Transverse colon (tissue), 4 donors: ENCODE measurements at regions of chr3 and their contacts with region 1.

Region 1: DNA sequence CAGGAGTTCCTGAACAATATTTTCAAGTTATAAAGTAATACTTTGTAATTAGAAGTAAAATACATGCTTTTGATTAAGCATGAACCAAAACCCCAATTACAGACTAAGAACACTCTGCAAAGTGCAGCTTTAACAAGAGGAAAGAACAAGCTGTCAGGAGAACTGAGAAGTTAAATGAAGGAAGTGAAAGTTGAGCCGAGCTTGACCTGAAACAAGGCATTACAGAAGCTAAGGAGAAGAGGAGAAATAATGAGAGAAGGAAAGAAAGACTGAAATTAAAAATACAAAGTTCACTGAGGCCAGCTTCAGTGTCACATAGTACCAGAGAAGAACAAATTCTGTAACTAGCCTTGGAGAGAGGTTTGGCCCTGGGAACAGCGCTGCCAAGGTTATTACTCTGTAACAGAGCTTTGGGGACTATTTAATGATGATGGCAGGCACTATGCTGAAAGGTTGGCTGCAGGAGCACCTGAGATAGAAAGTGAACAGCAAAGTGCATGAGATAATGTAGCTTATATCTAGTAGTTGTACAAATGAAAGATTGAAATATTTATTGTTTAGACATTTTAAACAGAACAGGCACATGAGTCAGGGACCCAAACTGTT is 241.9 kb upstream of the PEX5L start:
- DNase-seq: no peak
- H3K4me3 ChIP-seq: no peak overlapping the region
- H3K27ac ChIP-seq: no peak overlapping the region
- H3K4me1 ChIP-seq: no peaks in the 10 kb centered on the region
- H3K27me3 ChIP-seq: no peaks in the 10 kb centered on the region
- CTCF ChIP-seq: no peak
- EP300 ChIP-seq: no peak
- POLR2A ChIP-seq: no peak

Region 2: DNA sequence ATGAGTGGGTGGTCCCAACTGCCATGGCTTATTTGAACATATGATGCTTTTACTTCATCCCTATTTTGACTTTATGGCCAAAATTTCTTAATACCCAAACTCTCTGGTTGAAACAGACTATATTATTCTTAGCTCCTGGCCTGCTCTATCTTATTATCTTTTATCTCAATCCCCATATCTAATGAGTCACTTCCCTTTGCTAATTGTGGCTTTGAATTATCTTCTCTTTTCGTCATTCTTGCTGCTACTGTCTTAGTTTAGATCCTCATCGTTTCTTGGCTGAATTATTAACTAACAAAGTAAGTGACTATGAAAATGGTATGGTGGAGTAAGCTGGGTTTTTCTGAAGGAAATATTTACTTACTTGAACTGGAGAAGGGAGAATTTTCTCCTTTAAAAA is 739.0 kb after region 1 on chr3:
- in situ Hi-C with region 1: no loop called
- intact Hi-C with region 1: loop called (anchors 5 kb)
- DNase-seq: no peak
- H3K4me3 ChIP-seq: no peak overlapping the region
- H3K27ac ChIP-seq: no peak overlapping the region
- H3K4me1 ChIP-seq: no peaks in the 10 kb centered on the region
- H3K27me3 ChIP-seq: no peaks in the 10 kb centered on the region
- CTCF ChIP-seq: no peak
- EP300 ChIP-seq: no peak
- POLR2A ChIP-seq: no peak